Naive thymus-derived CD8-positive, alpha-beta T cell (primary cell): ENCODE measurements at regions of chr17 and their contacts with region 1.

Region 1: DNA sequence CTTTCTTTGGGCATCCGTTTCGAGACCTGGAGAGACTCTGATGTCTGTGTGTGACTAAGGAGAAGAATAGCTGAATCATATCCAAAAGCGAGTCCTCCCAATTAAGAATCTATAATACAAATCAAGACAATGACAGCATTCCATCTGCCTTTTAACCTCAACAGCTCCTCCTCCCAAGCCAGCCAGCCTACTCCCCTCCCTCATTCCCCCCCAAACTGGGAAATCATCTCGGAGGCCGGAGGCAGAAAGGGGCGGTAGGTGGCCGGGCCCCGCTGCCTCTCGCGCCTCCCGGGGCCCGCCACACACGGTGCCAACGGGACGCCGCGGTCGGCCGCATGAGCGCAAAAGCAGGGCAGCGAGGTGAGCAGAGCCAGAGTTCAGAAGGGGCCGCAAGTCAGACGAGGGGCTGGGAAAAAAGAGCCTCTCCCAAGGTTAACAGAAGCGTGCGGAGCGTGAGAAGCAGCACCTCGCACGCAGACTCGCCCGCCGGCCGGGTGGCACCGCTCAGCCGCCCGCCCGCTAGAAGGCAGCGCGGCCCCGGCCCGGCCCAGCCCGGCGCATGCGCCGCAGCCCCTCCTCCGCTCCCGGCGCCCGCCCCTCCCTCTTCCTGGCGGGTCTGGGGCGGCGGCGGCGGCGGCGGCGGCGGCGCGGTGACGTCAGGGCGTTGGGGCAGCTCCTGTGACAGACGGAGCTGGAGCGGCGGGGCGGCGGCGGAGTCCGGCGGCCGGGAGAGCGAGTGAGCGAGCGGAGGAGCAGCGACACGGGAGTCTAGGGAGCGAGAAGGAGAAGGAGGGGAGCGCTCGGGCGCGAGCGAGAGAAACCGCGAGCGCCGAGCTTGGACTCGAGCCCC is at the start of gene PAFAH1B1:
- DNase-seq: peak; percentile 89 to 98 (median 96)
- ATAC-seq: peak; percentile 80 to 84
- H3K4me3 Mint-ChIP-seq: peak within 1 kb of the TSS; percentile 86 to 100 (median 96)
- H3K27ac Mint-ChIP-seq: peak within 1 kb of the TSS; percentile 82 to 98 (median 96)
- H3K4me1 Mint-ChIP-seq: peaks cover 16 to 38% (median 33%) of the 10 kb centered on the region in 4 donors
- H3K27me3 Mint-ChIP-seq: no peaks in the 10 kb centered on the region
- polyA plus RNA-seq, gene PAFAH1B1: 10.5 to 12.5 (median 11.3) TPM

Region 2: GRCh38 chr17:2511462-2512369 is 81.5 kb before region 1 on chr17 and contains the start of gene METTL16:
- POLR2A ChIA-PET with region 1: interaction called, 22 read pairs
- DNase-seq: peak; percentile 91 to 99 (median 96)
- ATAC-seq: peak; percentile 97 to 98
- H3K4me3 Mint-ChIP-seq: peak within 1 kb of the TSS in 1 of 10 donors; percentile 55
- H3K27ac Mint-ChIP-seq: peak within 1 kb of the TSS in 1 of 10 donors; percentile 69
- H3K4me1 Mint-ChIP-seq: peaks cover 12 to 17% (median 14%) of the 10 kb centered on the region in 4 donors
- H3K27me3 Mint-ChIP-seq: no peaks in the 10 kb centered on the region
- polyA plus RNA-seq, gene METTL16: 18.7 to 35.1 (median 24.1) TPM